A673 (cell line): ENCODE measurements at regions of chr6 and their contacts with region 1.

Region 1: DNA sequence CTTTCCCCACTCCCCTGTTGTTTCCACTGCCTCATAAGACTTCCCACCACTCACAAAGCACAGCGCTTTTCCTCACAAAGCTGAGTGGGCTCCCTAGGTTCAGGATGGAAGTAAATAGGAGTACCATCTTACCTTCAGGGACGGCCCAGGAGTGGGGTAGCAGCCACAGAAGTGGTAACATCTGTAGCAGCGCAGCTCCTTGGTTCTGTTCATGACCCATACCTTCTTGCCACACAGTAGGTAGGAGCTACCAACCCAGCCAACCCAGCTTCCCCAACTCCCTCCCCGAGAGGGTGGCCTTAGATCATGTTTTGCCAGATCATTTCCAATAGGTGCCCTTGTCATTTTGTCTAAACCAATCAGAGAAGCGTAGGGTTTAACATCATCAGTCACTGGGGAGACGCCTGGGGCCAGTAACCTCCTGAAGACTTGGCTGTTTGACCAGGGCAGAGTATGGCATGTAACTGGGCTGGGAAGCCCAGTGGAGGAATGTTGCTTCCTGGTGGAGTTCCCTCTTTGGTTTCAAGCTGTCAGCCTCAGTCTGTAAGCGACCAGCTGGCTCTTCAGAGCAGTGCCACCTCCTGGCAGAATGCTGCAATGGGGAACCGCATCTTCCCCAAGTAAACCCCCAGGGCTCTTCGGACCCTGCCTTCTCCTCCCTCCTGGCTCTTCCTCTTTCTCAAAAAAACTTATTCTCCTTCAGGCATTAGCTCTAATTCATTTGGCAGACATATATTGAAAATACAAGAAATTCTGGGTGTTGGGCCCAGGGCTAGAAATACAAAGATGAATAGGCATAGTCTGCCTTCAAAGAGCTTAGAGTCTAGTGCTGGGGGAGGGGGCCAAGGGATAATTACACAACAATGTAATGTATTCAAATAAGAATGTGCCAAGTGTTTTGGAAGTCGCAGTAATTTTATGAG is at the start of gene HLA-DMA:
- DNase-seq: peak; percentile 75
- H3K4me3 ChIP-seq: no peak within 1 kb of the TSS
- H3K27ac ChIP-seq: no peak within 1 kb of the TSS
- H3K4me1 ChIP-seq: no peaks in the 10 kb centered on the region
- H3K27me3 ChIP-seq: no peaks in the 10 kb centered on the region
- CTCF ChIP-seq: peak; percentile 90
- total RNA-seq, gene HLA-DMA: 1.4 and 1.9 TPM in 2 replicates

Region 2: GRCh38 chr6:32551410-32551809 is 401.7 kb before region 1 on chr6:
- CTCF ChIA-PET with region 1: no interaction called
- POLR2A ChIA-PET with region 1: no interaction called
- intact Hi-C with region 1: no loop called
- DNase-seq: peak; percentile 28
- H3K4me3 ChIP-seq: no peak overlapping the region
- H3K27ac ChIP-seq: no peak overlapping the region
- H3K4me1 ChIP-seq: no peaks in the 10 kb centered on the region
- H3K27me3 ChIP-seq: peaks cover 3% of the 10 kb centered on the region
- CTCF ChIP-seq: no peak

Region 3: GRCh38 chr6:32885698-32886286 is 67.3 kb before region 1 on chr6:
- CTCF ChIA-PET with region 1: interaction called, 7 read pairs
- POLR2A ChIA-PET with region 1: interaction called, 7 read pairs
- intact Hi-C with region 1: loop called (anchors 2 kb)
- DNase-seq: peak; percentile 79
- H3K4me3 ChIP-seq: no peak overlapping the region
- H3K27ac ChIP-seq: no peak overlapping the region
- H3K4me1 ChIP-seq: peaks cover 5% of the 10 kb centered on the region
- H3K27me3 ChIP-seq: no peaks in the 10 kb centered on the region
- CTCF ChIP-seq: peak; percentile 67

Region 4: DNA sequence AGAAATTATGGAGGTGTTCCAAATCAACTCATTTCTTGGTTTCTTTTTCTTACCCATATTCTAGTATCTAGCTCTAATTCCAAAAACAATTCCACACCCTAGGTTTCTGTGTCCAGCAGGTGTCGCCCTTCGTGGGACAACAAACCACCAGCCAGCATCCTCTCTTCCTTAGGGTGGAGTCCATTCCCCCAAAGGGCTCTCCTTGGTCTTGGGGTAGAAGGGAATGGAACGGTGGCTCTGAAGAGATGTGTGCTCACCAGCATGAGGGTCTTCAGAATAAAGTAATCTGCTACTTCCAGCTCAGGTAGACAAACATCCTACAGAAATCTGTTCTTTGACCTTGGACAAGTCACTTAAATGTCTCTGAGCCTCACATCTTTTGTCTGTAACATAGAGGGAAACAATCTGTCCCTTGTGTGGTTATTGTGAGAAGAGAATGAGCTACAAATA is 19.4 kb before region 1 on chr6:
- CTCF ChIA-PET with region 1: interaction called, 15 read pairs
- POLR2A ChIA-PET with region 1: no interaction called
- intact Hi-C with region 1: no loop called
- DNase-seq: peak; percentile 82
- H3K4me3 ChIP-seq: no peak overlapping the region
- H3K27ac ChIP-seq: no peak overlapping the region
- H3K4me1 ChIP-seq: no peaks in the 10 kb centered on the region
- H3K27me3 ChIP-seq: peaks cover 25% of the 10 kb centered on the region
- CTCF ChIP-seq: peak; percentile 88

Region 5: DNA sequence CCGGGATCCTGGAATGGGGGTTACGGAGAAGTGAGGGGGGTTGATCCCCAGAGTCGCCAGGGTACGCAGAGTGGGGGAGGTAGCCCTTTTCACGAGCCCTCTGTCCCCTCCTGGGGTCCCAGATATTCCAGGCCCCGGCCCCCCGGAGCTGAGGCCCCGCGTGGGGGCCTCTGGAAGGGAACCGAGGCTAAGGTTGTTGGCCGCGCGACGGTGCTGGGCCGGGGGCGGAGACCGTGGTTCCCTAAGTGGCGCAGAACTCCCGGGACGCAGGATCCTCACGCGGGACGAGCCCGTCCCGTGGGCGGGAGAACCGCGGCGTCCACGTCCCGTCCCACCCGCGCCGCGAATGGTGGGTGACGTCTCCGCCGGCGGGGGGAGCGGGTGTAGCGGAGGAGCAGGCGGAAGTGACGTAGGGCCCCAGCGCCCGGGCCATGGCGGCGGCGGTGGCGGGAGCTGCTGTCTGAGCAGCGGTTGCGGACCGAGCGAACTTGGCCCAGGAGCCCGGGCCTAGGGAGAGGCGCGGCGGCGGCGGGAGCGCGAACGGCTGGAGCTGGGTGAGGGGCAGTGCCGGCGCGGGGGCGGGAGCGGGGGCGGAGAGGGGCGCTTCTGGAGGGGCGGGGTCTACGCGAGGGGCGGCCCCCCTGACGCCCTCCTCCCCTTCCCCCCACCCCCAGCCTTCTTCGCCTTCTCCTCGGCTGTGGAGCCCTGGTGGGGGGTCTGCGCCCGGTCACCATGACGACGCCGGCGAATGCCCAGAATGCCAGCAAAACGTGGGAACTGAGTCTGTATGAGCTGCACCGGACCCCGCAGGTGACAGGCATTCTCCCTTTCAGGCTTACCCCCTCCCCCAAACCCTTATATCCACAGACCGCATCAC is 255.3 kb after region 1 on chr6 and contains the start of gene RING1:
- CTCF ChIA-PET with region 1: no interaction called
- POLR2A ChIA-PET with region 1: no interaction called
- intact Hi-C with region 1: no loop called
- DNase-seq: peak; percentile 85
- H3K4me3 ChIP-seq: peak within 1 kb of the TSS; percentile 96
- H3K27ac ChIP-seq: peak within 1 kb of the TSS; percentile 98
- H3K4me1 ChIP-seq: peaks cover 42% of the 10 kb centered on the region
- H3K27me3 ChIP-seq: no peaks in the 10 kb centered on the region
- CTCF ChIP-seq: no peak
- total RNA-seq, gene RING1: 43.3 and 47.5 TPM in 2 replicates

Region 6: GRCh38 chr6:33570806-33571636 is 617.9 kb after region 1 on chr6:
- CTCF ChIA-PET with region 1: no interaction called
- POLR2A ChIA-PET with region 1: no interaction called
- intact Hi-C with region 1: no loop called
- DNase-seq: peak; percentile 93
- H3K4me3 ChIP-seq: peak overlapping the region; percentile 56
- H3K27ac ChIP-seq: peak overlapping the region; percentile 75
- H3K4me1 ChIP-seq: peaks cover 18% of the 10 kb centered on the region
- H3K27me3 ChIP-seq: no peaks in the 10 kb centered on the region
- CTCF ChIP-seq: no peak